ENCODE measurements at regions of chr12 and their contacts with region 1.

Region 1: GRCh38 chr12:95117178-95117599 is 43.8 kb upstream of the NR2C1 start:
- DNase-seq: peak; percentile 83
- H3K4me3 ChIP-seq: no peak overlapping the region
- H3K27ac ChIP-seq: peak overlapping the region; percentile 66 to 81 (median 68)
- H3K4me1 ChIP-seq: peaks cover 0 to 40% (median 25%) of the 10 kb centered on the region in 4 donors
- H3K27me3 ChIP-seq: no peaks in the 10 kb centered on the region
- CTCF ChIP-seq: peak; percentile 60 to 78 (median 69)
- EP300 ChIP-seq: no peak
- POLR2A ChIP-seq: no peak

Region 2: GRCh38 chr12:93183940-93184671 is 1933.1 kb before region 1 on chr12:
- intact Hi-C with region 1: no loop called
- DNase-seq: peak; percentile 85
- H3K4me3 ChIP-seq: no peak overlapping the region
- H3K27ac ChIP-seq: peak overlapping the region; percentile 70 to 81 (median 78)
- H3K4me1 ChIP-seq: peaks cover 0 to 38% (median 34%) of the 10 kb centered on the region in 4 donors
- H3K27me3 ChIP-seq: no peaks in the 10 kb centered on the region
- CTCF ChIP-seq: no peak
- EP300 ChIP-seq: peak in 3 of 4 donors; percentile 33 to 48 (median 37)
- POLR2A ChIP-seq: no peak

Region 3: GRCh38 chr12:95164656-95165055 is 47.5 kb after region 1 on chr12:
- intact Hi-C with region 1: loop called (anchors 5 kb)
- DNase-seq: no peak
- H3K4me3 ChIP-seq: no peak overlapping the region
- H3K27ac ChIP-seq: peak overlapping the region in 3 of 4 donors; percentile 42 to 73 (median 56)
- H3K4me1 ChIP-seq: peaks cover 0 to 23% (median 21%) of the 10 kb centered on the region in 4 donors
- H3K27me3 ChIP-seq: no peaks in the 10 kb centered on the region
- CTCF ChIP-seq: no peak
- EP300 ChIP-seq: no peak
- POLR2A ChIP-seq: no peak

Region 4: GRCh38 chr12:95336390-95337067 is 219.3 kb after region 1 on chr12:
- intact Hi-C with region 1: loop called (anchors 1 kb)
- DNase-seq: peak; percentile 89
- H3K4me3 ChIP-seq: peak overlapping the region in 2 of 4 donors; percentile 8 to 24
- H3K27ac ChIP-seq: peak overlapping the region; percentile 81 to 87 (median 84)
- H3K4me1 ChIP-seq: peaks cover 0 to 40% (median 27%) of the 10 kb centered on the region in 4 donors
- H3K27me3 ChIP-seq: no peaks in the 10 kb centered on the region
- CTCF ChIP-seq: peak; percentile 45 to 76 (median 61)
- EP300 ChIP-seq: no peak
- POLR2A ChIP-seq: no peak

Region 5: GRCh38 chr12:95473884-95474659 is 356.9 kb after region 1 on chr12 and contains the start of gene METAP2:
- intact Hi-C with region 1: loop called (anchors 5 kb)
- DNase-seq: peak; percentile 98
- H3K4me3 ChIP-seq: peak within 1 kb of the TSS; percentile 61 to 83 (median 74)
- H3K27ac ChIP-seq: peak within 1 kb of the TSS; percentile 81 to 93 (median 90)
- H3K4me1 ChIP-seq: peaks cover 0 to 46% (median 26%) of the 10 kb centered on the region in 4 donors
- H3K27me3 ChIP-seq: no peaks in the 10 kb centered on the region
- CTCF ChIP-seq: no peak
- EP300 ChIP-seq: peak in 1 of 4 donors; percentile 13
- POLR2A ChIP-seq: peak; percentile 90
- total RNA-seq, gene METAP2: 75.1 to 152 (median 85.0) TPM

Region 6: GRCh38 chr12:95532851-95533250 is 415.7 kb after region 1 on chr12:
- intact Hi-C with region 1: loop called (anchors 1 kb)
- DNase-seq: no peak
- H3K4me3 ChIP-seq: no peak overlapping the region
- H3K27ac ChIP-seq: no peak overlapping the region
- H3K4me1 ChIP-seq: peaks cover 0 to 13% (median 11%) of the 10 kb centered on the region in 4 donors
- H3K27me3 ChIP-seq: no peaks in the 10 kb centered on the region
- CTCF ChIP-seq: no peak
- EP300 ChIP-seq: no peak
- POLR2A ChIP-seq: no peak

Measured in sigmoid colon (tissue), 7 donors.